Mucosa of descending colon (tissue), 3 donors: ENCODE measurements at regions of chr9 and their contacts with region 1.

Region 1: DNA sequence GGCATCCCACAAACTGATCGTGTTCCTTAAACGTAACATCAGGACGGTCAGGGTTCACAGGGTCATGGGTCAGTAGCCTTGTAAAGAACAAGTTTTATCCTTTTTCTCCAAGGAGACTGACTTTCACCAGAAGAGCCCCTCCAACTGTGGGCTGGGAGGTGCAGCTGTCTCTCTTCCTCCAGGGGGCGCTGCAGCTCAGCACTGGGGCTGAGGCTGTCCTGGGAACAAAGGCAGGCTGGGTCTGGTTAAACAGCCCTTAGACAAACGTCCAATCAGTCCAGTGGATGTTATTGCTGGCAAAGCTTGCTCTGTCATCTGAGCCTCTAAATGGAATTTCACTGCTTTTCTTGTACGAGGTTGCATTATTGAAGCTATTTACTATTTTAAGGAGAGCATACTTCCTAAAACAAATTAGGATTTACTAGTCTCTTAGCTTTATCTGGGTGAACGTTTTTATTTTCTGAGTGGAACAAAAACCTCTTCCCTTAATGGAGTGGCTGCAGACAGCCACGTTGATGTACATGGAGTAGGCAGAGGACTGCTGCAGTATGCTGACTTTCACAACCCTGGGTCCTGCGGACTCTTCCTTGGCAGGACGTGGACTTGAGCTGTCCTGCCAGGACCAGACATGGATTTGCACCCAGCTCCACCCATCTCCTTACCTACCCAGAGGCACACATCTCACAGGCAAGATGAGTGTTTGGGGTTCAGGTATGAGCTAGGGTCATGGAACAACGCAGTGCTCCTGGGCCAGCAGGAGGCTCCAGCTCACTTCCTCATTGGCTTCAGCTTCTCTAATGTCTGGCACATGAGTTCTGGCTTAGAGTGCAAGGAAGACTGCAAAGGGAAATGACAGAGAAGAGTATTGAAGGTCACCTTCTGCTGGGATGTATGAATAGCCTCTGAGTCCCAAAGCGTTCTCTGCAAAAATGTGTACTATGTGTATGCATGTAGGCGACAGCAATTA is 7.8 kb downstream of the EXOSC2 start:
- DNase-seq: peak; percentile 66 to 86 (median 84)
- ATAC-seq: peak; percentile 99
- H3K4me3 ChIP-seq: no peak overlapping the region
- H3K4me1 ChIP-seq: no peaks in the 10 kb centered on the region
- CTCF ChIP-seq: peak; percentile 92

Region 2: DNA sequence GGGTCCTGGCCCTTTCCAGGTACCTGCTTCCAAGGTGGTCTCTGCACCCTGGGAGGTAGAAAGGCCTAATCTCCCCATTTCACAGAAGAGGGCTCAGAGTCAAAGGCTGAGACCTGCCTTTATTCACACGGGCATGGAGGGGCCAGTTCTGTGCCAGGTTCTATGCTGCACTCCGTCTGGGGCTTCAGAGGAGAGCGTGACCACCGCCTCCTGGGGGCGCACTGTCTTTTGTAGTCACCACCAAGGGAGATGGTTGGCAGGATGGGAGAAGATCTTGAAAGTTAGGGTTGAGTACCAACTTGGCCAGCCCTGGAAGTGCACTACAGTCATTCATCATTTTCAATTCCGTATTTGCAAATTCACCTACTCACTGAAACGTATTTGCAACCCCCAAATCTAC is 60.7 kb before region 1 on chr9:
- intact Hi-C with region 1: no loop called
- DNase-seq: peak in 1 of 3 donors; percentile 4
- ATAC-seq: no peak
- H3K4me3 ChIP-seq: no peak overlapping the region
- H3K4me1 ChIP-seq: no peaks in the 10 kb centered on the region
- CTCF ChIP-seq: no peak

Region 3: DNA sequence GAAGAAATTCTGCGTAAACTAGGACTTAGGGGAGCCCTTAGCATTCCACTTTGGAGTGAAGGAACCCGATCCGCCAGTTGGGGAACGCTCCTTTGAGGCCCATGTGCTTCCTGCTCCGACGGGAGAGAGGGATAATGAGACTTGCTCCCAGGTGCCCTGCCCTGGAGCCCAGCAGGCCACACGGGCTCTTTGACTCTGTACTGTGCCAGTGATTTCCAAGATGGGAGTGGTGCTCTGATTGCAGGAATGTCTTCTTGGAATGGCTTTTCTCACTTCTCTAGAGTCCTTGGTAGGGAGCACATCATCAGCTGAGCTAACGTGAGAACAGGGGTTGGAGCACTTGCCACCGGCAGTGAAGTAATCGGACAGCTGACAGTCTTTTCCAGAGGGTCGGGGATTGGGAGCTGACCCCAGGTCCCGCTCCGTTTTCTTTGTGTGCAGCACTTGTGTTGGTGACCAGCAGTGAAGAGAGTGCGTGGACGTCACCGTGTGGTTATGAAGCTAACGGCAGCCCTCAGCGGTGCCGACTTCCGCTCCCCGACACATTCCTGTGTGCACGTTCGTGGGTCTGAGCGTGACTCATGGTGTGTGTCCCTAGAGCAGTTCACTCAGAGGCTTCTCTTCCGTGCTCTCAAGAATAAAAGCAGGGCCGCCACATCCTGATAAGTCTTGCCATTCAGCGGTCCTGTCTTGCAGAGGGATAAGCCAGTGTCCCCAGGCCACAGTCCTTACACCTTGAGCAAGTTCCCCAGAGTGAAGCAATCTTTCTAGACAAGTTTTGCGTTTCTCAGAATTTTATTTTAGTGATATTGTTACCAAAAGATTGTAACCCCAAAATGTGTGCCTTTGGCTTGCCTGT is 159.3 kb after region 1 on chr9:
- intact Hi-C with region 1: loop called (anchors 5 kb)
- DNase-seq: peak; percentile 48 to 66 (median 51)
- ATAC-seq: peak; percentile 59
- H3K4me3 ChIP-seq: no peak overlapping the region
- H3K4me1 ChIP-seq: no peaks in the 10 kb centered on the region
- CTCF ChIP-seq: no peak

Region 4: GRCh38 chr9:130940693-130941576 is 239.6 kb after region 1 on chr9:
- intact Hi-C with region 1: loop called in 1 of 2 experiments (anchors 5 kb)
- DNase-seq: peak; percentile 90 to 95 (median 94)
- ATAC-seq: peak; percentile 92
- H3K4me3 ChIP-seq: no peak overlapping the region
- H3K4me1 ChIP-seq: peaks cover 19% of the 10 kb centered on the region
- CTCF ChIP-seq: peak; percentile 77

Region 5: DNA sequence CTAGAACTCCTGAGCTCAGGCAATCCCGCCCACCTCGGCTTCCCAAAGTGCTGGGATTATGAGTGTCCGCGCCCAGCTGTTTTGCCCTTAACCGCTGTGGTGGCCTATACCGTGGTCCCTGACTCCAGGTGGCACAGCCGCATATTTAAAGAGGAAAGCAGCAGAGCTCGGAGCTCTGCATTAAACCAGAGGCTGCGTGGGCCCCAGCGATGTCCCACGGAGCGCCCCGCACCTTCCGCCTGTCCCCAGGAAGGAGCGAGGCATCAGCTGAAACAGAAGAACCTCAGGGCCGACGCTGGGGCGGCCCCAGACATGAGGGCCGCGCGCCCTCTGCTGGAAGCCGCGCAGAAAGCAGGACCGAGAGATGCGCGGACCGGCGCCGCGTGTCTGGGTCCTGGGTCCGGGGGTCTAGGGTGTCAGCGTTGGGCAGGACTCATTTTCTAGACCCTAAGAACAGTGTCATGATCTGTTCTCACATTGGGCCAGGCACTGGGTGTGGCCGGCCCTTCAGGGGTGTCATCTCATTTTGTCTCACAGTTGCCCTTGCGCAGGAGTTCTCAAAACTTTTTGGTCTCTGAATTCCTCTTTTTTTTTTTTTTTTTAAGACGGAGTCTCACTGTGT is 345.4 kb after region 1 on chr9:
- intact Hi-C with region 1: loop called in 1 of 2 experiments (anchors 10 kb)
- DNase-seq: peak in 2 of 3 donors; percentile 76 to 80
- ATAC-seq: peak; percentile 92
- H3K4me3 ChIP-seq: no peak overlapping the region
- H3K4me1 ChIP-seq: no peaks in the 10 kb centered on the region
- CTCF ChIP-seq: peak; percentile 79